ENCODE measurements at regions of chr15 and their contacts with region 1.

Region 1: DNA sequence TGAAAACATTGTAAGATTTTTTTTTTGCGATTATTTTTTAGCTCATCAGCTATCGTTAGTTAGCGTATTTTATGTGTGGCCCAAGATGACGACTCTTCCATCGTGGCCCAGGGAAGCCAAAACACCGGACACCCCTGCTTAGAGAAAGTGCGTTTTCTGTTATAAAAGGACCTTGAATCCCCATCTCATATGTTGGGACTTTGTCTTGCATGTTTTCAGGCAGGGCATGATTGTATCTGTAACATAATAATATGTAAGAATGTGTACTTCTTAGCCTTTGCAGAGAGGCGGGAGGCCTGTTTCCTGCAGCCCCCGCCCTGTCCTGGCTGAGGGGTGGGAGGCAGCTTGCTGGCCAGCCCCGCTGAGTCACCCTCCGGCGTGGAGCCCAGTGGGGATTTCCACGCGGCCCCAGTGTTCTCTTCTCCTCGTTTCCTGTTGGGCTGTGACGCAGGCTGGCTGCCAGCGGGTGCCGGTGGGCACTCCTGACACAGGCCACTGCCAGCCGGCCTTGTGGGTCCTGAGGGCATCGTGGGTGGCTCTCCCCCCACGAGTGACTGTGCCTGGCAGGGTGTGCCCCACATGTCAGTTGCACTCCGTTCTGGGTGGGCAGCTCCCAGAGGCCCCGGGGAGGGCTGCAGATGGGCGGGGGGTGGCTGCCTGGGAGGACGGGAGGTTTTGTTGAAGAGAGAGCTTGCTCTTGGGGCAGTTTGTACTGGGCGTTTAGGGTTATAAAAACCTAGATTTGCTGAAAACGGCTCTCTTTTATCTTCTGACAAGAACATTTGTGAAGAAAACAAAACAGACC is 55.6 kb downstream of the SMAD3 start:
- DNase-seq: peak; percentile 51
- ATAC-seq: peak; percentile 92
- H3K4me3 ChIP-seq: no peak overlapping the region
- H3K27ac ChIP-seq: peak overlapping the region; percentile 58
- H3K4me1 ChIP-seq: peaks cover 49% of the 10 kb centered on the region
- H3K27me3 ChIP-seq: no peaks in the 10 kb centered on the region
- CTCF ChIP-seq: no peak
- EP300 ChIP-seq: peak; percentile 85 to 86; a peak in 2 of 4 replicates
- POLR2A ChIP-seq: peak; percentile 77
- RAD21 ChIP-seq: no peak

Region 2: GRCh38 chr15:67085818-67086636 is 35.0 kb before region 1 on chr15:
- CTCF ChIA-PET with region 1: interaction called, 5 read pairs
- POLR2A ChIA-PET with region 1: interaction called, 4 read pairs
- RAD21 ChIA-PET with region 1: interaction called, 18 read pairs
- SMC1A ChIA-PET with region 1: interaction called, 14 read pairs
- in situ Hi-C with region 1: no loop called
- intact Hi-C with region 1: loop called (anchors 5 kb)
- DNase-seq: peak; percentile 97
- ATAC-seq: peak; percentile 66
- H3K4me3 ChIP-seq: peak overlapping the region; percentile 54
- H3K27ac ChIP-seq: peak overlapping the region; percentile 86
- H3K4me1 ChIP-seq: peaks cover 84% of the 10 kb centered on the region
- H3K27me3 ChIP-seq: no peaks in the 10 kb centered on the region
- CTCF ChIP-seq: no peak
- EP300 ChIP-seq: peak; percentile 95 to 96
- POLR2A ChIP-seq: no peak
- RAD21 ChIP-seq: peak; percentile 26; the same call in 1 of the 2 replicates

Region 3: GRCh38 chr15:67109141-67110034 is 11.7 kb before region 1 on chr15:
- CTCF ChIA-PET with region 1: interaction called, 14 read pairs
- POLR2A ChIA-PET with region 1: interaction called, 24 read pairs
- RAD21 ChIA-PET with region 1: interaction called, 33 read pairs
- SMC1A ChIA-PET with region 1: interaction called, 40 read pairs
- in situ Hi-C with region 1: no loop called
- intact Hi-C with region 1: no loop called
- DNase-seq: no peak
- ATAC-seq: peak; percentile 88
- H3K4me3 ChIP-seq: peak overlapping the region; percentile 23; the same call in 1 of the 2 replicates
- H3K27ac ChIP-seq: peak overlapping the region; percentile 92
- H3K4me1 ChIP-seq: peaks cover 63% of the 10 kb centered on the region
- H3K27me3 ChIP-seq: no peaks in the 10 kb centered on the region
- CTCF ChIP-seq: no peak
- EP300 ChIP-seq: peak; percentile 91 to 93; a peak in 3 of 4 replicates
- POLR2A ChIP-seq: peak; percentile 52
- RAD21 ChIP-seq: peak; percentile 4; the same call in 1 of the 2 replicates

Region 4: GRCh38 chr15:67134067-67134838 is 13.2 kb after region 1 on chr15:
- CTCF ChIA-PET with region 1: interaction called, 8 read pairs
- POLR2A ChIA-PET with region 1: interaction called, 11 read pairs
- RAD21 ChIA-PET with region 1: interaction called, 16 read pairs
- SMC1A ChIA-PET with region 1: interaction called, 179 read pairs
- in situ Hi-C with region 1: no loop called
- intact Hi-C with region 1: no loop called
- DNase-seq: no peak
- ATAC-seq: peak; percentile 89
- H3K4me3 ChIP-seq: peak overlapping the region; percentile 51
- H3K27ac ChIP-seq: peak overlapping the region; percentile 89
- H3K4me1 ChIP-seq: peaks cover 67% of the 10 kb centered on the region
- H3K27me3 ChIP-seq: no peaks in the 10 kb centered on the region
- CTCF ChIP-seq: no peak
- EP300 ChIP-seq: no peak
- POLR2A ChIP-seq: peak; percentile 71
- RAD21 ChIP-seq: no peak

Region 5: GRCh38 chr15:67150028-67150860 is 29.2 kb after region 1 on chr15:
- CTCF ChIA-PET with region 1: interaction called, 3 read pairs
- POLR2A ChIA-PET with region 1: no interaction called
- RAD21 ChIA-PET with region 1: interaction called, 5 read pairs
- SMC1A ChIA-PET with region 1: interaction called, 10 read pairs
- in situ Hi-C with region 1: no loop called
- intact Hi-C with region 1: no loop called
- DNase-seq: peak; percentile 51
- ATAC-seq: peak; percentile 80
- H3K4me3 ChIP-seq: no peak overlapping the region
- H3K27ac ChIP-seq: peak overlapping the region; percentile 41
- H3K4me1 ChIP-seq: peaks cover 17% of the 10 kb centered on the region
- H3K27me3 ChIP-seq: no peaks in the 10 kb centered on the region
- CTCF ChIP-seq: no peak
- EP300 ChIP-seq: 0 out of 4 replicates have a peak, but pooled peaks of 1 of the 2 experiments have one; percentile 10
- POLR2A ChIP-seq: no peak
- RAD21 ChIP-seq: no peak

Measured in GM12878 (cell line).